ENCODE measurements at regions of chr15 and their contacts with region 1.

Region 1: DNA sequence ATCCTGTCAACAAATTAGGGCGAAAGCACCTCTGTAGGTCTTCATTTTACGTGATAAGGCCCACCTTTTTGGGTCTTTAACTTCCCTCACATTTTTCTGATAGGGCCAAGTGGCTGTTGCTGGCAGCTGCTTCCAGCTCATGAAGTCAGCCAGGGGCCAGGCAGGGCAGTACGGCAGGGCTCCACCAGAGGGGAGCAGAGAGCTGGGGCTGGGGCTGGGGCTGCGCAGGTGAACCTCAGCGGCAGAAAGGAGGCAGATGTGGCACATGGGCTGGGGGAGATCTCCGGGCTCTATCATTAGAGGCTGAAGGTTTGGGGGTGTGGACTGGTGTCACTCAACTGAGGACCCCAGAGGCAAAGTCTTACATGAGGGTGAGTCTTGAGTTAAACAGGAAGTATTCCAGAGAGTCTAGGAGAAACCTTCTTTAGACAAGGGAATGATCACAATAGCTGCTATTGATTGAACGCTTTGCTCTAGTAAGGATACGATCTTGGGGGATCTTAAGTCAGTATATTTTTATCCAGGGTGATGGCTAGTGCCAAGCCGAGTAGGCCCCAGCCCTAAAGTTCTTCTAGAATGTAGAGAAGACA is 62.8 kb upstream of the MEX3B start:
- DNase-seq: peak; percentile 60 to 86
- H3K4me3 ChIP-seq: no peak overlapping the region
- H3K4me3 Mint-ChIP-seq: no peak overlapping the region
- H3K27ac Mint-ChIP-seq: no peak overlapping the region
- H3K4me1 ChIP-seq: no peaks in the 10 kb centered on the region
- H3K4me1 Mint-ChIP-seq: no peaks in the 10 kb centered on the region
- H3K27me3 ChIP-seq: no peaks in the 10 kb centered on the region
- H3K27me3 Mint-ChIP-seq: no peaks in the 10 kb centered on the region
- CTCF ChIP-seq: peak; percentile 93 to 94

Region 2: DNA sequence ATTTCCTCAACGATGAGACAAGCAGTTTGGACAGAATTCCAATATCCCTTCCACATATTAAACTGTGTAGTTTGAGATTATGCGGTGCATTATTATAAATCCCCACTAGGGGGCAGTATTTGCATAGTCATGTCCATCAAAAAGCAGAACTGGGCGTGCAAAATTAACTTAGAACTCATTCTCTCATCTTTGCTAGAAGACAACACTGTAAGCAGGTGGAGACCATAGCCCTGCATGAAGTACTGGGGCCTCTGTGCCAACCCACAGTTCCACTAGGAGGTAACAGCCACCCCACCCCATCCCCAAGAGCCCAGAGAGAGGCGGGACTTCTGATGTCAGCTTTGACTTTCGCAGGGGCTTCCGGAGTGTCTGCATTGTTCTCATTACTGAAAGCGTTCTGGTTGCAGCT is 627.9 kb before region 1 on chr15:
- CTCF ChIA-PET with region 1: no interaction called
- POLR2A ChIA-PET with region 1: no interaction called
- intact Hi-C with region 1: loop called (anchors 10 kb)
- DNase-seq: peak in 1 of 2 experiments; percentile 67
- H3K4me3 ChIP-seq: no peak overlapping the region
- H3K4me3 Mint-ChIP-seq: no peak overlapping the region
- H3K27ac Mint-ChIP-seq: no peak overlapping the region
- H3K4me1 ChIP-seq: no peaks in the 10 kb centered on the region
- H3K4me1 Mint-ChIP-seq: no peaks in the 10 kb centered on the region
- H3K27me3 ChIP-seq: no peaks in the 10 kb centered on the region
- H3K27me3 Mint-ChIP-seq: no peaks in the 10 kb centered on the region
- CTCF ChIP-seq: peak; percentile 54 to 56

Region 3: GRCh38 chr15:81981908-81982307 is 126.7 kb before region 1 on chr15:
- CTCF ChIA-PET with region 1: no interaction called
- POLR2A ChIA-PET with region 1: no interaction called
- intact Hi-C with region 1: no loop called
- DNase-seq: no peak
- H3K4me3 ChIP-seq: no peak overlapping the region
- H3K4me3 Mint-ChIP-seq: no peak overlapping the region
- H3K27ac Mint-ChIP-seq: no peak overlapping the region
- H3K4me1 ChIP-seq: no peaks in the 10 kb centered on the region
- H3K4me1 Mint-ChIP-seq: no peaks in the 10 kb centered on the region
- H3K27me3 ChIP-seq: no peaks in the 10 kb centered on the region
- H3K27me3 Mint-ChIP-seq: peaks cover 8% of the 10 kb centered on the region
- CTCF ChIP-seq: no peak

Region 4: DNA sequence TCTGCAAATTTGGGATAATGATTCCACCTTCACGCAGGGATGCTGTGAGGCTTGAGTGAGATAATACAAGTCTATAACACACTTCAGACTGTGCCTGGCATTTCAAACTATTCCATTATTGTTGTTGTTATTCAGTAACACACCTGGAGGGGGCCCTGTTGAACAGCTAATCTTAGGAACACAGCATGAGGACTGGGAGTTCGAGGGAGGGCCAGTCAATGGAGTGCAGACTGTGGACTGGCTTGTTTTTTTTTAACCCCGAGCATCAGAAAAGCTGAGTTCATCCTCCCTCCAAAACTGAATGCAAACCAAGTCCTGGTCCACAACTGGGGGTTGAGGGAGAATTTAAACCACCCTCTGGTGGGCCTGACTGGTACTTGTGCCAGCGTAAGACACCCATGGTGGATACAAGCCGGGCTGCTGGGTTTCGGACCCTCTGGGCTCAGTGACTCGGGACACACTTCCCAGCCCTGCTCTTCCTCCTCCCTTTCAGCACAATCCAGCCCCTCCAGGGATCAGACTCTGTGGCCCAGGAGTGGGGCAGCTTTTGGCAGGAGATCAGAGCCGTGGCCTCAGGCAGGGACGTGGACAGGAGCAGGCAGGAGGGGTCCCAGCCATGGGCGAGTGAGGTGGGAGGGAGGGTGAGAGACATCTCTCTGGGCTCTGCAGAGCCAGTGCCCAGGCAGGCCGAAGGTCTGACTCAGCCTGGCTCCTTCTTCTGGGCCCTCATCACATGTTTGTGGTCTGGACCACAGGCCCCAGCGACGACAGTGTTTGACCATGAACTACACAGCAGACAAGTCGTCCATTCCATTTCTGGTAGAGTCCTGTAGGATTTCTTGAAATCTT is 26.4 kb before region 1 on chr15:
- CTCF ChIA-PET with region 1: no interaction called
- POLR2A ChIA-PET with region 1: no interaction called
- intact Hi-C with region 1: no loop called
- DNase-seq: no peak
- H3K4me3 ChIP-seq: no peak overlapping the region
- H3K4me3 Mint-ChIP-seq: no peak overlapping the region
- H3K27ac Mint-ChIP-seq: no peak overlapping the region
- H3K4me1 ChIP-seq: no peaks in the 10 kb centered on the region
- H3K4me1 Mint-ChIP-seq: no peaks in the 10 kb centered on the region
- H3K27me3 ChIP-seq: no peaks in the 10 kb centered on the region
- H3K27me3 Mint-ChIP-seq: peaks cover 40% of the 10 kb centered on the region
- CTCF ChIP-seq: no peak

Region 5: GRCh38 chr15:82139823-82140268 is 31.3 kb after region 1 on chr15:
- CTCF ChIA-PET with region 1: interaction called, 10 read pairs
- POLR2A ChIA-PET with region 1: no interaction called
- intact Hi-C with region 1: loop called (anchors 1 kb)
- DNase-seq: peak in 1 of 2 experiments; percentile 22
- H3K4me3 ChIP-seq: no peak overlapping the region
- H3K4me3 Mint-ChIP-seq: no peak overlapping the region
- H3K27ac Mint-ChIP-seq: no peak overlapping the region
- H3K4me1 ChIP-seq: no peaks in the 10 kb centered on the region
- H3K4me1 Mint-ChIP-seq: peaks cover 7% of the 10 kb centered on the region
- H3K27me3 ChIP-seq: no peaks in the 10 kb centered on the region
- H3K27me3 Mint-ChIP-seq: no peaks in the 10 kb centered on the region
- CTCF ChIP-seq: peak; percentile 43 to 54

Region 6: DNA sequence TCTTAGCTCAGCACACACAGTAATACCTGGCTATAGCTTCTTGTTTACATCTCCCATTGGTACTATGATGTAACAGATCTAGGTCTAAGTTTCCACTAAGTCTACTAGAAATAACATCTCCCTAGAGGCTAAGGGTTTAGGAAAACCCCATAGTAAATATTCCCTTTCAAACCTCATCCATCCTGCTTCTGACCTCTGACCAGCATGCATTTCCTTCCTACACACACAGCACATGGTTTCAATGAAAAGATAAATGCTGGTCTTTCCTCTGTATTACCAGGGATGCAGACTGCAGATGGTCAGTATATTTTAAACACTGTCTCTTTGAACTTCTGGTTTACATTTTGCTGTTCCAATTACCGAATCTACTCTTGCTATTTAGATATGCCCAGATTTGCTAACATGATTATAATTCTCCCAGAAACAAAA is 57.4 kb after region 1 on chr15:
- CTCF ChIA-PET with region 1: interaction called, 15 read pairs
- POLR2A ChIA-PET with region 1: no interaction called
- intact Hi-C with region 1: no loop called
- DNase-seq: no peak
- H3K4me3 ChIP-seq: no peak overlapping the region
- H3K4me3 Mint-ChIP-seq: no peak overlapping the region
- H3K27ac Mint-ChIP-seq: peak overlapping the region; percentile 78
- H3K4me1 ChIP-seq: peaks cover 9% of the 10 kb centered on the region; the same call in 1 of the 2 replicates
- H3K4me1 Mint-ChIP-seq: peaks cover 17% of the 10 kb centered on the region
- H3K27me3 ChIP-seq: no peaks in the 10 kb centered on the region
- H3K27me3 Mint-ChIP-seq: no peaks in the 10 kb centered on the region
- CTCF ChIP-seq: no peak

Region 7: DNA sequence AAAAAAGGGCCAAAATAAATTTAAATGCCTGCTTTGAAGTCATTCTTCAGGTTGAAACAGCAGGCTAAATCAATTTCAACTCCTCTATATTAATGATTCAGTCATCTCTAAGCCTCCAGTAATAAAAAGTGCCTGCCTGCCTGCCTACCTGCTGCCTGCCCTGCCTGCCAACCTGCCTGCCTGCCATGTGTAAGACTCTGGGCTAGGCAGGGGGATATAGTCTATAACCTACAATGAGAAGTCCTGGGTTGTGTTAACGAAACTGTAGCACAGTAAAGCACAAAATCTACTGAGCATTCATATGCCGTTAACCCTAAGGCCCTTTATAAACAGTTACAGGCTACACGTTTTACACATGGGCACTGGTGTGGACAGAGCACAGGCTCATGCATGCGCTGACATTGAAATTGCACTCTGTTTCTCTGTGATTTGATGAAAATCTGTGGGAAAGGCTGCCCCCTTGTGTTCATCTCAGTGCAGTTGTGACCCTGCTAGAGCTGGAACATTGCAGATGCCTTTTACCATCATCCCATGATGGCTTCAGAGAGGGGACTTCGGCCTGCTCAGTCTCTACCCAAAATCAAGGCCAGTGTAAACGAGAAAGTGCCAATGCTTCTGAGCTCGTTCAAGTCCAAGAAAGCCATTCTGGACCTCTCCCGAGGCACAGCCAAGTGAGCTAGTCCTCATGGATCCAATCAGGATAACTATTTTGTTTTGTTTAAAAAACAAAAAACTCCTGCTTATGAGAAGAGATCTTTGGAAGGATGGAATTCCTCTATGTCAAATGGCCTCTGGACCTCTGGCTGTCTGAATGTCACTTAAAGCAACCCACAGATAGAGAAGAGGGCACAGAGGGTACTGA is 89.4 kb after region 1 on chr15:
- CTCF ChIA-PET with region 1: interaction called, 28 read pairs
- POLR2A ChIA-PET with region 1: no interaction called
- intact Hi-C with region 1: loop called (anchors 1 kb)
- DNase-seq: peak; percentile 57 to 74
- H3K4me3 ChIP-seq: no peak overlapping the region
- H3K4me3 Mint-ChIP-seq: no peak overlapping the region
- H3K27ac Mint-ChIP-seq: no peak overlapping the region
- H3K4me1 ChIP-seq: no peaks in the 10 kb centered on the region
- H3K4me1 Mint-ChIP-seq: no peaks in the 10 kb centered on the region
- H3K27me3 ChIP-seq: no peaks in the 10 kb centered on the region
- H3K27me3 Mint-ChIP-seq: no peaks in the 10 kb centered on the region
- CTCF ChIP-seq: peak; percentile 51 to 79